ENCODE measurements at regions of chr5 and their contacts with region 1.

Region 1: GRCh38 chr5:58902765-58903164 is 319.9 kb downstream of the RAB3C start:
- DNase-seq: no peak
- ATAC-seq: no peak
- H3K4me3 ChIP-seq: no peak overlapping the region
- H3K27ac ChIP-seq: no peak overlapping the region
- H3K4me1 ChIP-seq: no peaks in the 10 kb centered on the region
- H3K27me3 ChIP-seq: peaks cover 8% of the 10 kb centered on the region
- CTCF ChIP-seq: no peak
- POLR2A ChIP-seq: no peak
- RAD21 ChIP-seq: no peak

Region 2: DNA sequence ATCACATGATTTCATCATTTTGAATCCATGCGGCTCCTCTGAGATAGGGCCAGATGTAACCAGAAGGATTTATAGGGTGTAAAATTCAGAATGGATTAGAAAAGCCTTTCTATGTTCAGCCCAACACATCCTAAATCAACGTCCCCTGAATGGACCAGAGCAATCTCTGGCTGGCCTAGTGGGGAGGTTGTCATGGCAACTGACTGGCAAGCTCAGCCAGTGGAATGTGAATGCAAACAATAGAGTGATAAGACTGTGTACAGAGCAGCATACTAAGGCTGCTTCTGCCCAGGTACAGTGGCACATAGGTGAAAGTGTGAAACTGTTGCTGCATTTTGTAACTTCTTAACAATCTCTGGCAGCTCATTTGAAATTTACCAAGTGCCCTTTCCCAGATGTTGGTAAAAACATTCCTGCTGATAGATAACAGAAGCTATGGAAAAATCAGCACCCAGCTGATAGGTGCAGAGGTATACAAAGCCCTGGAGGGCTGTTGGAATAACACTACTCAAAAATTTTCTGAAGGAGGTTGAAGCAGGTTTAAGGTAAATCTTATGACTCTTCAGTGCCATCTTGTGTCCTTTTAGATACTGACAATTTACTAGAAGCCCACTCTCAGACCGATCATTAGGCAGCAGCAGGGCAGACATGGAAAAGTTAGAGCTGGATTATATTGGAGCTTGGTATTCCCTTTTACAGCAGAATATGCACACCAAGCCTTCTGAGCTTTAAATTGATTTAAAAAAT is 52.7 kb before region 1 on chr5:
- CTCF ChIA-PET with region 1: no interaction called
- POLR2A ChIA-PET with region 1: no interaction called
- dilution Hi-C with region 1: no loop called
- in situ Hi-C with region 1: no loop called
- intact Hi-C with region 1: no loop called
- DNase-seq: peak; percentile 26
- ATAC-seq: peak; percentile 70; the same call in 1 of the 2 replicates
- H3K4me3 ChIP-seq: no peak overlapping the region
- H3K27ac ChIP-seq: no peak overlapping the region
- H3K4me1 ChIP-seq: no peaks in the 10 kb centered on the region
- H3K27me3 ChIP-seq: peaks cover 7% of the 10 kb centered on the region
- CTCF ChIP-seq: peak; percentile 48
- POLR2A ChIP-seq: no peak
- RAD21 ChIP-seq: peak; percentile 37

Region 3: DNA sequence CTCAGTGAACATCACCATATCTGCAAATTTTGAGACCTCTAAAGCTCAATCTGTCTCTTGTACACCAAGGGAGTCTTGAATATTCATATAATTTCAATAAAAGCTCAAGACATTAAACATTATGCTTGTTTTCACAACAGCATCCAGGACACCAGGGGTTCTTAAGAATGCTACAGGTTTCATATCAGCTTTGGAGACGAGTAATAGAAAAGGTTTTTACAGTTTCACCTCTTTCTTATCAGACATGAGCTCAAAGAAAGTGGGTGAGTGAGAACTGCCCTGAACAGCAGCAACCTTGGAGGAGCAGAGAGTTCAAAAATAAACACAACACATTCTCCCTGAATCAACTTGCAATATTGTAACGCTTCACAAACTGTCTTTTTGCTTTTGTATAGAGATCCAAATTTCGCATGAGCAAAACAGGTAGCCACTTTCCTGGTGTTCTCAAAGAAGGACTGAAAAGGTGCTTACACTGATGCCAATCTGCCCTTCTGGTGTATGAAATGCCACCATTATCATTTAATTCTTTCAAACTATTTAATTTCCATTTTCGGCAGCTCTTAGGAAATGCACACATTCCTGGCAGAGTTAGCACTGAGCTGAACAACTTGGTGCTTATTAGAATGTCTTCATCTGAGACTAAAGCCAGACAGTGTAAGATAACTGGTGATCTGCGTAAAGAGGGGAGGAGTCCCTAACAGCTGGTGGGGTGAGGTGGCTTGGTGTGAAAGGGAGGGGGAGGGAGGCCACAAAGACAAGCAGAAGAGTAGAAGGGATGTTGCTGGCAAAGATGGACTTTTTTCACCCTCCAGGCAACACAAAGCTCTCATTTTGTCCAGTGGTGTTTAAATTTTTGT is 455.5 kb after region 1 on chr5:
- CTCF ChIA-PET with region 1: no interaction called
- POLR2A ChIA-PET with region 1: no interaction called
- dilution Hi-C with region 1: no loop called
- in situ Hi-C with region 1: loop called (anchors 25 kb)
- intact Hi-C with region 1: loop called (anchors 5 kb)
- DNase-seq: peak; percentile 16
- ATAC-seq: peak; percentile 42
- H3K4me3 ChIP-seq: no peak overlapping the region
- H3K27ac ChIP-seq: no peak overlapping the region
- H3K4me1 ChIP-seq: no peaks in the 10 kb centered on the region
- H3K27me3 ChIP-seq: no peaks in the 10 kb centered on the region; the same call in 1 of the 2 replicates
- CTCF ChIP-seq: no peak
- POLR2A ChIP-seq: no peak
- RAD21 ChIP-seq: no peak

Measured in IMR-90 (cell line).